ENCODE measurements at regions of chr5 and their contacts with region 1.

Region 1: DNA sequence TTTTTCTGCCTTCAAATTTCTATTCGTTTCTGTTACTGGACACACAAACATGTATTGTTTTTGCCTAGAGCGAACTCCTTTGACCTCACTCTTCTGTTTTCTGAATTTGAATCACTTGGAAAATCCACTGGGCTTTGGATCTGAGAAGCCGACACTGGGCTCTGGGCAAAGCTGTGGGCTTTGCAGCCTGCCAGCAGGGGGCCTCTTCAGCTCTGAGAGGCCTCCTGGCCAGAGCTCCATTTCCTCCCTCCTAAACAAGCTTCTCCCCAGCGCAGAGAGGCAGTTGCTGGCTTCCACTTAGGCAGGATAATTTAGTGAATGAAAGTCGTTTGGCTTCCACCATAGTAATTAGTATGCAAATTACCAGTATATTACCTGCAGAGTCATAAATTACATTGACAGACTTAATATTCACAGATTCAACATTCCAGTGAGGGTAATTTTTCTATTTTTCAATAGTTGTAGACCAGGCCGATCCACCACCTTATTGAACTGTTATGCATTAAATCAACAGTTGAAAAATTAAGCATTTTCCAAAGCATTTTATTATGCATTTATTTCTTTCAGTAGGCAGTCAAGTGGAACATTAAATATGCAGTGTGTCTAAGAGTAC is 104.0 kb upstream of the ZNF366 start:
- DNase-seq: peak; percentile 55 to 75
- ATAC-seq: peak; percentile 95 to 99
- H3K4me3 ChIP-seq: peak overlapping the region in 1 of 4 donors; percentile 2
- H3K27ac ChIP-seq: peak overlapping the region in 1 of 4 donors; percentile 27
- H3K4me1 ChIP-seq: peaks cover 4 to 6% of the 10 kb centered on the region in 2 donors
- H3K27me3 ChIP-seq: no peaks in the 10 kb centered on the region
- CTCF ChIP-seq: peak; percentile 86 to 95 (median 93)
- POLR2A ChIP-seq: no peak

Region 2: DNA sequence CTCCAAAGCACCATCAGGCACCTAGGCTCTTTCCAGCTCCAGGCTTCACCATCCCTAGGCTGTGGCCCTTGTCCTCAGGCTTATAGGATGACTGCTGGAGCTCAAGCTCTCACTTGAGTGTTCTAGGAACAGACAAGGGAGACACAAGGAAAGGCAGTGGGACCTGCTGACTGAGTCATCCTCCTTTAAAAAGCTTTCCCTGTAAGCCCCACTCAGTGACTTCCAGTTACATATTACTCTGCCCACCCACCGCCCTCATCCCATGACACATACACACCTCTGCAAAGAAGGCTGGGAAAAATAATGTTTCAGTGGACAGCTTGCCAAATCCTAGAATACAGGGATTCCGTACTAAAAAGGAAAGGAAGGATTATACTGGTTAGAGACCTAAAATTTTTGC is 50.2 kb after region 1 on chr5:
- in situ Hi-C with region 1: no loop called
- intact Hi-C with region 1: loop called (anchors 2 kb)
- DNase-seq: no peak
- ATAC-seq: peak; percentile 25 to 42
- H3K4me3 ChIP-seq: no peak overlapping the region
- H3K27ac ChIP-seq: no peak overlapping the region
- H3K4me1 ChIP-seq: peaks cover 30 to 39% of the 10 kb centered on the region in 2 donors
- H3K27me3 ChIP-seq: no peaks in the 10 kb centered on the region
- CTCF ChIP-seq: no peak
- POLR2A ChIP-seq: no peak

Region 3: DNA sequence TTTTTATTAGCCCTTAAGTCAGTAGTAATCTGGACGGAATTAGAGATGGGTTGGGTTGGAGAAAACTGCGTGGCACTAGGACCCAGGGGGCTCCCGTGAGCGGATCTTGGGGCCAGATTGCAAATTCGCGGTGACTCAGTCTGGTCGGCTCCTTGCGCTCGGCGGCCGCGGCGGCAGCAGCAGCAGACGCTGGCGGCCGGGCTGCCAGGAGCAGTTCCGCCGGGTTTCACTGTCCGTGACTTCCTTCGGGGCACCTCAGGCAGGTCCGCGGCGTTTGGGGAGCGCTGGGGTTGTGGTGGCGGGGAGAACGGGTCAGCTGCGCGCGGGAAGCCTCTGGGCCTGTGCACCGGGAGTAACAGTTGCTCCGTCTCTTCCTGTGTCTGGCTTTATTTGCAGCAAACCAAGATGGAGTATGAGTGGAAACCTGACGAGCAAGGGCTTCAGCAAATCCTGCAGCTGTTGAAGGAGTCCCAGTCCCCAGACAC is 236.8 kb after region 1 on chr5:
- in situ Hi-C with region 1: loop called in 1 of 4 experiments (anchors 10 kb)
- intact Hi-C with region 1: no loop called
- DNase-seq: peak; percentile 87 to 92
- ATAC-seq: peak; percentile 89 to 90
- H3K4me3 ChIP-seq: peak overlapping the region; percentile 81 to 92 (median 91)
- H3K27ac ChIP-seq: peak overlapping the region; percentile 90 to 97 (median 96)
- H3K4me1 ChIP-seq: peaks cover 76 to 83% of the 10 kb centered on the region in 2 donors
- H3K27me3 ChIP-seq: no peaks in the 10 kb centered on the region
- CTCF ChIP-seq: peak in 1 of 5 experiments; percentile 8
- POLR2A ChIP-seq: peak; percentile 94 to 95

Region 4: GRCh38 chr5:72955768-72956323 is 344.6 kb after region 1 on chr5 and contains the start of gene FCHO2:
- in situ Hi-C with region 1: loop called in 1 of 4 experiments (anchors 25 kb)
- intact Hi-C with region 1: no loop called
- DNase-seq: peak; percentile 96 to 97
- ATAC-seq: peak; percentile 89 to 90
- H3K4me3 ChIP-seq: peak within 1 kb of the TSS; percentile 71 to 85 (median 80)
- H3K27ac ChIP-seq: peak within 1 kb of the TSS; percentile 92 to 97 (median 96)
- H3K4me1 ChIP-seq: peaks cover 41 to 43% of the 10 kb centered on the region in 2 donors
- H3K27me3 ChIP-seq: no peaks in the 10 kb centered on the region
- CTCF ChIP-seq: peak; percentile 72 to 93 (median 87)
- POLR2A ChIP-seq: peak; percentile 62 to 79
- total RNA-seq, gene FCHO2: 8.3 to 14.8 (median 12.3) TPM

Measured in gastrocnemius medialis (tissue), 4 donors.